HEK293 (cell line): ENCODE measurements at regions of chr7 and their contacts with region 1.

Region 1: DNA sequence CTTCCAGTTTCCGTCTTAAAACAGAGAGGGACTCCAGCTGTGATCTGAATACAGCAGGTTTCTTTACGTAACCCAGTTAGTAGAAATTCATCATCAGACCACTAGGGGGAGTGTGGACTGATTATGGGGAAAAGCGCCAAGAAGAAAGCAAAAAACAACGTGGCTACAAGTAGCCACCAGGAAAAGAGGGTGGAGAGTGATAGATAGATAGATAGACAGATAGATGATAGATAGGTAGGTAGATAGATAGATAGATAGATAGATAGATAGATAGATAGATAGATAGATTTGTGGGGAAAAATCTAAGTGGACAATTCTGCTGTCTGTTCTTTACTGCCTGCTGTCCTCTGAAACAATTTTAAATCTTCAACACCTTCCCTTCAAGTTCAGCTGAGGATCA is 12.7 kb upstream of the AKR1B10 start:
- H3K4me3 ChIP-seq: no peak overlapping the region
- H3K27ac ChIP-seq: no peak overlapping the region
- H3K4me1 ChIP-seq: no peaks in the 10 kb centered on the region
- CTCF ChIP-seq: peak; percentile 66; the same call in 1 of the 2 replicates

Region 2: GRCh38 chr7:134444198-134444871 is 70.3 kb before region 1 on chr7:
- CTCF ChIA-PET with region 1: interaction called, 12 read pairs
- POLR2A ChIA-PET with region 1: no interaction called
- H3K4me3 ChIP-seq: no peak overlapping the region
- H3K27ac ChIP-seq: no peak overlapping the region
- H3K4me1 ChIP-seq: no peaks in the 10 kb centered on the region
- CTCF ChIP-seq: no peak

Region 3: GRCh38 chr7:134480736-134481135 is 33.9 kb before region 1 on chr7:
- CTCF ChIA-PET with region 1: interaction called, 12 read pairs
- POLR2A ChIA-PET with region 1: no interaction called
- H3K4me3 ChIP-seq: no peak overlapping the region
- H3K27ac ChIP-seq: no peak overlapping the region
- H3K4me1 ChIP-seq: no peaks in the 10 kb centered on the region
- CTCF ChIP-seq: no peak

Region 4: GRCh38 chr7:134553976-134554375 is 39.3 kb after region 1 on chr7:
- CTCF ChIA-PET with region 1: interaction called, 30 read pairs
- POLR2A ChIA-PET with region 1: no interaction called
- H3K4me3 ChIP-seq: no peak overlapping the region
- H3K27ac ChIP-seq: no peak overlapping the region
- H3K4me1 ChIP-seq: no peaks in the 10 kb centered on the region
- CTCF ChIP-seq: peak; percentile 26; the same call in 1 of the 2 replicates

Region 5: DNA sequence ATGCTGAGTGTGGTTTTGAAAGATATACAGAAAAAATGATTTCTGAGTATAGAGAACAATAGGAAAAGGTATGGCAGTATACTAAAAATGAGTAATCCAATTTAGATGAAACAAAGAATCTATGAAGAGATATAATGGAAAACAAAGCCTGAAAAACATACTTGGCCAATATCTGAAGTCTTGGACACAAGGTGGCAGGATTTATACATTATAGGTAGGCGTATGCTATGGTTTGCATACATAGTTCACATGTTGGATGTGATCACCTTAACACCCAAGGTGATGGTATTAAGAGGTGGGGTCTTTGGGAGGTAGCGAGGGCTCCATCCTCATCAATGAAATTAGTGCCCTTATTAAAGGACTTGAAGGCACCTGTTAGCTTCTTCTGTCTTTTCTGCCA is 97.5 kb after region 1 on chr7:
- CTCF ChIA-PET with region 1: interaction called, 63 read pairs
- POLR2A ChIA-PET with region 1: no interaction called
- H3K4me3 ChIP-seq: no peak overlapping the region
- H3K27ac ChIP-seq: no peak overlapping the region
- H3K4me1 ChIP-seq: no peaks in the 10 kb centered on the region
- CTCF ChIP-seq: no peak

Region 6: DNA sequence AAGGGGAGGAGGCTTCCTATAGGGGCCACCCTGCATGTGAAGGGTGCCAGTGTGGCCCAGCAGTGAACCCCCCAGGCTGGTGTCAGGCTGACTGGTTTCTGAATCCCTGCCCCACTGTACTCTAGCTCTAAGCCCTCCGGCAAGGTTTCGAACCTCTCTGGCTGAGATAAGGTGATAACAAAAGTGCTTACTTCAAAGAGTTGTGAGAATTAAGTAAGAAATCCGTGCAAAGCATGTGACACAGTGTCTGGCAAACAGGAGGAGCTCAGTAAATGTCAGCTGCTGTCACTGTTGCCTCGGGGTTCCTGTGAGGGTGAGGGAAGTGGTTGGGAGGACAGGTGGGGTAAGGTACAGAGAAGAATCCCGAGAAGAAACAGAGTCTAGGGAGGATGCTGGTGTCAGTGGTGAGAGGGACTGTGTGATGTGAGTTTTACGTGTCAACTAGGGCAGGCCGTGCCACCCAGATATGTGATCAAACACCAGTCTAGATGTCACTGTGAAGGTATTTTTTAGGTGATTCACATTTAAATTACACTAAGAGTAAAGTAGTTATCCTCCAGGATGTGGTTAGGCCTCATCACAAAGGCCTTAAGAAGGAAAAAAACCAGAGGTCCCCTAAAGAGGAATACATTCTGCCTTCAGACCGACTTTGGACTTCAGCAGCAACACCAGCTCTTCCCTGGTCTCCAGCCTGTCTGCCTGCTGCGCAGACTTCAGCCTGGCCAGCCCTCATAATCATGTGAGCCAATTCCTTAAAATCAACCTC is 196.4 kb after region 1 on chr7:
- CTCF ChIA-PET with region 1: no interaction called
- POLR2A ChIA-PET with region 1: no interaction called
- H3K4me3 ChIP-seq: no peak overlapping the region
- H3K27ac ChIP-seq: no peak overlapping the region
- H3K4me1 ChIP-seq: no peaks in the 10 kb centered on the region
- CTCF ChIP-seq: no peak

Region 7: DNA sequence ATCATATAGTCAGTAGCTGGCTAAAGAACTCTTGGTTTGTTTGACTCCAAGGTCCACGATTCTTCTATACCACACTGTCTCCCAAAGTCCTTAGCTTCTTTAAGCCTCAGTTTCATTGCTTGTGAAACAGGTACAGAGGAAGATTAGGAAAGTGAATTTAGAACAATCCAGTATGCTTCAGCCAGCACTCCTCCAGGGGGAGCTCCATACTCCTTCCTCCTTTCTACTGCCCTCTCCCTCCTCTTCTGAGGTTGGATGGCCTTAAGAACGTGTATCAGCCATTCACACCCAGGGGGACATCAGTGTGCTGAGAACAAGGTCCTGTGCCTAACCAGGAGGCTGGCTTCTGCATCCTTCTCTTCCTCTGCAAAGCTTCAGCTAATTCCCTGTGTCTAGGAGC is 209.9 kb after region 1 on chr7:
- CTCF ChIA-PET with region 1: no interaction called
- POLR2A ChIA-PET with region 1: no interaction called
- H3K4me3 ChIP-seq: no peak overlapping the region
- H3K27ac ChIP-seq: no peak overlapping the region
- H3K4me1 ChIP-seq: no peaks in the 10 kb centered on the region
- CTCF ChIP-seq: peak; percentile 53